A549 (cell line): ENCODE measurements at regions of chr5 and their contacts with region 1.

Region 1: DNA sequence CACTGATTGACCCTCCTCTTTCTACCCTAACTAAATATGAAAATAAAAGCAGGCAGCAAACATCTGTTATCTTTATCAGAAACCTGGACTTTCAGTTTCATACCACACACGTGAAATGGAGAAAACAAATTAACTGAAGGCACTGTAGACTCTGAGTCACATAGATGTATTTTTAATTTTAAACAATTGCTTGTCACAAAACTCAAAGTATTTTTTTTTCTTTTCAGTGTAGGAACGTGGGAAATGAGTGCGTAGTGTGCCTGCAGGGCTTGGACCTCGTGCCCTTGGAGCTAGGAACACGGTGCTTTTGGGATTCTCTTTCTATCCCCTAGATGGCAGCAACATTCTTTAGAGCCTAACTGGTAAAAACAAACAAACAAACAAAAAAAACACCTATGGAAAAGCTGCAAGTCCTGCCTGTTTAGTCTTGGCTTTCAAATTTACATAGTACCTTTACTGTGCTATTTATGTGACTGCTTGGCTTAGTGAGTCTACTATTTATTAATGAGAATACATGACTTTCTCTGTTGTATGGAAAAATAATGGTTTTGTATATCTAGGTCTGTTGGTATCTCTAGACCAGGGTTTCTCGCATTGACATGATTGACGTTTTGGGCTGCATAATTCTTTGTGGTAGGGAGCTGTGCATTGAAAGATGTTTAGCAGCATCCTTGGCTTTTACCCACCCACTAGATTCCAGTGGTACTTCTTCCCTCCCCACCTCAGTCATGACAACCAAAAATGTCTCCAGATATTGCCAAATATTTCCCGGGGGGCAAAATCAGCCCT is 16.8 kb upstream of the ACTBL2 start:
- DNase-seq: peak; percentile 47 to 74
- ATAC-seq: peak; percentile 85; a peak in 5 of 6 replicates
- H3K4me3 ChIP-seq: peak overlapping the region; percentile 23; the same call in 1 of the 3 replicates
- H3K27ac ChIP-seq: peak overlapping the region; percentile 57 to 66
- H3K4me1 ChIP-seq: peaks cover 21% of the 10 kb centered on the region
- CTCF ChIP-seq: peak; percentile 92
- EP300 ChIP-seq: no peak
- POLR2A ChIP-seq: no peak
- RAD21 ChIP-seq: peak; percentile 96

Region 2: GRCh38 chr5:57416249-57416994 is 83.0 kb before region 1 on chr5:
- CTCF ChIA-PET with region 1: no interaction called
- POLR2A ChIA-PET with region 1: no interaction called
- DNase-seq: no peak
- ATAC-seq: no peak
- H3K4me3 ChIP-seq: no peak overlapping the region
- H3K27ac ChIP-seq: no peak overlapping the region
- H3K4me1 ChIP-seq: no peaks in the 10 kb centered on the region
- CTCF ChIP-seq: no peak
- EP300 ChIP-seq: no peak
- POLR2A ChIP-seq: no peak
- RAD21 ChIP-seq: no peak

Region 3: DNA sequence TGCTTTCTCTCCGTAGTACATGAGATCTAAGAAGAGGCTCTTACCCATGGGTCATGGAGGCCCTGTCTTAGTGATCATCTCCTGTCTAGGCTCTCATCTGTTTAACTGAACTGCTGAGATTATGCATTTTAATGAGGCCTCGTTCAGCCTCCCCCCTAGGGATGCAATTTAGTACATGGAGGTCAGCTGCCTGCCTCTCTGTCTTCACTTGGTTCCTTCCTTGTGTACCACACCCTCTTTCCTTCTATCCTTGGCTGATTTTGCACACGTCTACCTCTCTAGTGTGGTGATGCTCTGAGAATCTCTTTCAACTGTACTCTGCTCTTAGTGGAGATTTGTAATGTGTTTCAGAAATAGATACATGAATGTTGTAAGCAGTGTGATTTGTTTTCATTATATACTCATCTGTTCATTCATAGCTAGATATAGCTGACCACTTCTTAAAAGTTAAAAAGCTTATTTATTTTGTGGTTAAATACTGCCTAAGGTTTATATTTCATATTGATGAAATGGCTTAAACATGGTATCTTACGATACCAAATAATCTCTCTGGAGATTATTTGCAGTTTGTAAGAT is 13.3 kb before region 1 on chr5:
- CTCF ChIA-PET with region 1: interaction called, 12 read pairs
- POLR2A ChIA-PET with region 1: no interaction called
- DNase-seq: no peak
- ATAC-seq: no peak
- H3K4me3 ChIP-seq: no peak overlapping the region
- H3K27ac ChIP-seq: no peak overlapping the region
- H3K4me1 ChIP-seq: no peaks in the 10 kb centered on the region
- CTCF ChIP-seq: no peak
- EP300 ChIP-seq: no peak
- POLR2A ChIP-seq: no peak
- RAD21 ChIP-seq: no peak

Region 4: GRCh38 chr5:57513785-57514184 is 14.3 kb after region 1 on chr5:
- CTCF ChIA-PET with region 1: interaction called, 30 read pairs
- POLR2A ChIA-PET with region 1: no interaction called
- DNase-seq: no peak
- ATAC-seq: no peak
- H3K4me3 ChIP-seq: no peak overlapping the region
- H3K27ac ChIP-seq: no peak overlapping the region
- H3K4me1 ChIP-seq: no peaks in the 10 kb centered on the region
- CTCF ChIP-seq: no peak
- EP300 ChIP-seq: no peak
- POLR2A ChIP-seq: no peak
- RAD21 ChIP-seq: no peak